ENCODE measurements at regions of chr16 and their contacts with region 1.

Region 1: GRCh38 chr16:69186642-69187445 is at the start of gene SNTB2:
- DNase-seq: peak; percentile 93 to 96
- ATAC-seq: peak; percentile 96 to 97 (median 96)
- H3K4me3 ChIP-seq: peak within 1 kb of the TSS; percentile 82
- H3K27ac ChIP-seq: peak within 1 kb of the TSS; percentile 80
- H3K4me1 ChIP-seq: peaks cover 26% of the 10 kb centered on the region
- H3K27me3 ChIP-seq: no peaks in the 10 kb centered on the region
- CTCF ChIP-seq: no peak
- total RNA-seq, gene SNTB2: 12.6 to 19.4 (median 14.7) TPM

Region 2: DNA sequence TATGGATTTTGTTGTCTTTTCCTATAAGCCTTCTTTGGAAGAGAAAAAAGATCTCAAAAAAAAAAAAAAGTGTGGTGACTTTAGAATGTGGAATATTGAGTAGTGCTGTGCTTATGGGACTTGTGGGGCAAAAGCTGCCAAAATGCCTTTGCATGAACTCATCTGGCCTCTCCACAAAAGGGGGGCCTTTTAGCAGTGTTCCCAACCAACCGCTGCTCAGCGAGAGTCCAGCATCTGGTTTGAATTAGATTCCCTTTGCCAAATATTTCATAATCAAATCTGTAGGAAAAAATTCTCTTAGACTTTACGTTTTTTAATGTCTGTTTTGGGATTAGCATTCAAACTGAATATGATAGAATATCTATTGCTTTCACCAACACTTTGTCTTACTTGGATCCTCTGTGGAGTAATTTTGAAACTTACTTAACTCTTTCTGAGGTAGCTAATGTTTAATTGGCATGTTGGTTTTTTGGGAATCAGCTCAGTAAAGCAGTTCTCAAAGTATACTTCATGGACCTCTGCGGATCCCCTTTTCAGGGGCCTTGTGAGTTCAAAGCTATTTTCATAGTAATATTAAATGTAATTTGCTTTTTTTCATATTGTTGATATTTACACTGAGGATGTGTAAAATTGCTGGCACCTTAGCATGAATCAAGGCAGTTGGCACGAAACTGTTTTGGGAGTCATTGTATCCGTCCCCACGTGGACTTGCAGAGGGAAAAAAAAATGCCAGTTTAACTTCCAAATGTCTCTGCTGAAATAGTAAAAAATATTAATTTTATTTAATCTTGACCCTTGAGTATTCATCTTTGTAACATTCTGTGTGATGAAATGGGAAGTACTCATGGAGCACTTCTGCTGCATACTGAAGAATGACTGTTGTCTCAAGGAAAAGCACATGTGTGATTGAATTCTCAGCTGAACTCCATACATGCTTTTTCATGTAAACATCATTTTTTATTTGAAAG is 89.6 kb after region 1 on chr16:
- intact Hi-C with region 1: loop called in 1 of 2 experiments (anchors 10 kb)
- DNase-seq: peak; percentile 61 to 80
- ATAC-seq: peak; percentile 48 to 81 (median 75)
- H3K4me3 ChIP-seq: no peak overlapping the region
- H3K27ac ChIP-seq: peak overlapping the region; percentile 18
- H3K4me1 ChIP-seq: peaks cover 23% of the 10 kb centered on the region
- H3K27me3 ChIP-seq: no peaks in the 10 kb centered on the region
- CTCF ChIP-seq: no peak